ENCODE measurements at regions of chr1 and their contacts with region 1.

Region 1: DNA sequence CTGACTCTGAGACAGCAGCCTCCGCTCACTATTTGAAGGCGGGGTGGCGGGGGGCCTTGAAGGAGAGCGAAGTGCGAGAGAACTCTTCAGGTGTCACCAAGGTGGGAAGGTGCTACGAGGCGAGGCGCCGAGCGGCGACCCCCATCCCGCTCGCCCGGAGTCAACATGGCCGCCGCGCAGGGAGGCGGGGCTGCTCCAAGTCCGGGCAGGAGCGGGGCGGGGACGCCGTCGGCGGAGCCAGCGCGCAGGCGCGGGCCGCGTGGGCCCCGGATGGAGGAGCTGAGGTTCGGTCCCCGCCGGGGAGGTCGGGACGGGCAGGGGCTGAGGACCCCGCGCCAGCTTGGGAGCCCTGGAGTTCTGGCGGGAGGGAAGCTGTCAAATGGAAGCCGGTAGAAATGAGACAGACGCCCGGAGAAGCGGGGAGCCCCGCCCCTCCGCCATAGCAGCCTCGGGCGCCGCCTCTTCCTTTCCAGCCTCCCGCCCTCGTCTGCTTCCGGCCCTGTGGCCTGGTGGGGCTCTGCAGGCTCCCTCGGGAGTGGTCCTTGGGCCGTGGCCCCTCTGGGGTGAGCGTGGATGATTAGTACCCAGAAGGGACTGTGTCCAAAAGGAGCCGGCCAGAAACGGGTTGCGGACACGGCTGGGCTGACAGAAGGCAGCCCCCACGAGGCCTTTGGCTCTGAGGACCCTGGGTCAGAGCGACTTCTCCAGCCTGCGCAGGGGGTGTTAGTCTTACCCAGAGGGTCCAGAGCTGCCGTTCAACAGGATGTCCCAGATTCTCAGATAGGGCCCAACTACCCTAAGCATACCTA is at the start of gene PIGV:
- DNase-seq: no peak
- ATAC-seq: peak; percentile 78
- H3K4me3 ChIP-seq: peak within 1 kb of the TSS; percentile 72
- H3K27ac ChIP-seq: peak within 1 kb of the TSS; percentile 99
- H3K4me1 ChIP-seq: peaks cover 43% of the 10 kb centered on the region
- H3K27me3 ChIP-seq: no peaks in the 10 kb centered on the region
- CTCF ChIP-seq: no peak
- EP300 ChIP-seq: no peak
- POLR2A ChIP-seq: peak; percentile 73
- RAD21 ChIP-seq: no peak
- polyA plus RNA-seq, gene PIGV: 8.8 to 12.8 TPM

Region 2: GRCh38 chr1:26500488-26501175 is 287.3 kb before region 1 on chr1:
- CTCF ChIA-PET with region 1: interaction called, 38 read pairs
- POLR2A ChIA-PET with region 1: interaction called, 12 read pairs
- RAD21 ChIA-PET with region 1: interaction called, 27 read pairs
- SMC1A ChIA-PET with region 1: interaction called, 10 read pairs
- in situ Hi-C with region 1: no loop called
- intact Hi-C with region 1: loop called (anchors 5 kb)
- DNase-seq: peak; percentile 39
- ATAC-seq: peak; percentile 86
- H3K4me3 ChIP-seq: peak overlapping the region; percentile 89
- H3K27ac ChIP-seq: peak overlapping the region; percentile 95
- H3K4me1 ChIP-seq: peaks cover 14% of the 10 kb centered on the region
- H3K27me3 ChIP-seq: no peaks in the 10 kb centered on the region
- CTCF ChIP-seq: no peak
- EP300 ChIP-seq: peak in 1 of 2 experiments; percentile 36; a peak in 1 of 4 replicates
- POLR2A ChIP-seq: peak; percentile 97
- RAD21 ChIP-seq: no peak

Region 3: DNA sequence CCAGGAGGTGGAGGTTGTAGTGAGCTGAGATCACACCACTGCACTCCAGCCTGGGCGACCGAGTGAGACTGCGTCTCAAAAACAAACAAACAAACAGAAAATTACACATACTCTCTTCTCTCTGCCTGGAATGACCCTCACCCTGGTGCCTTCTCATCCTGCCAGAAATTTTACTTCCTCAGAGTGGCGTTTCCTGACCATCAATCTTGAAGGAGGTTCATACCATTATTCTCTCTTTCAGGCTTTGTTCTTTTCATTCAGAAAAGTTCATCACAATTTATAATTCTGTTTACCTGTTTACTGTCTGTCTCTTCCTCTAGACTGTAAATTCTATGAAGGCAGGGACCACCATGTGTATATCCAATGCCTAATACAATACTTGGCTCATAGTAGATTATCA is 179.0 kb before region 1 on chr1:
- CTCF ChIA-PET with region 1: interaction called, 450 read pairs
- POLR2A ChIA-PET with region 1: interaction called, 47 read pairs
- RAD21 ChIA-PET with region 1: interaction called, 262 read pairs
- SMC1A ChIA-PET with region 1: interaction called, 268 read pairs
- in situ Hi-C with region 1: loop called (anchors 5 kb)
- intact Hi-C with region 1: no loop called
- DNase-seq: no peak
- ATAC-seq: no peak
- H3K4me3 ChIP-seq: no peak overlapping the region
- H3K27ac ChIP-seq: no peak overlapping the region
- H3K4me1 ChIP-seq: no peaks in the 10 kb centered on the region
- H3K27me3 ChIP-seq: no peaks in the 10 kb centered on the region
- CTCF ChIP-seq: peak in 1 of 3 experiments; percentile 35; a peak in 2 of 6 replicates
- EP300 ChIP-seq: no peak
- POLR2A ChIP-seq: no peak
- RAD21 ChIP-seq: peak; percentile 49

Region 4: GRCh38 chr1:26700711-26701110 is 87.2 kb before region 1 on chr1:
- CTCF ChIA-PET with region 1: interaction called, 46 read pairs
- POLR2A ChIA-PET with region 1: interaction called, 69 read pairs
- RAD21 ChIA-PET with region 1: interaction called, 90 read pairs
- SMC1A ChIA-PET with region 1: interaction called, 139 read pairs
- in situ Hi-C with region 1: no loop called
- intact Hi-C with region 1: loop called (anchors 1 kb)
- DNase-seq: no peak
- ATAC-seq: peak; percentile 1
- H3K4me3 ChIP-seq: peak overlapping the region; percentile 98
- H3K27ac ChIP-seq: peak overlapping the region; percentile 65
- H3K4me1 ChIP-seq: peaks cover 8% of the 10 kb centered on the region
- H3K27me3 ChIP-seq: no peaks in the 10 kb centered on the region
- CTCF ChIP-seq: no peak
- EP300 ChIP-seq: no peak
- POLR2A ChIP-seq: no peak
- RAD21 ChIP-seq: no peak

Region 5: DNA sequence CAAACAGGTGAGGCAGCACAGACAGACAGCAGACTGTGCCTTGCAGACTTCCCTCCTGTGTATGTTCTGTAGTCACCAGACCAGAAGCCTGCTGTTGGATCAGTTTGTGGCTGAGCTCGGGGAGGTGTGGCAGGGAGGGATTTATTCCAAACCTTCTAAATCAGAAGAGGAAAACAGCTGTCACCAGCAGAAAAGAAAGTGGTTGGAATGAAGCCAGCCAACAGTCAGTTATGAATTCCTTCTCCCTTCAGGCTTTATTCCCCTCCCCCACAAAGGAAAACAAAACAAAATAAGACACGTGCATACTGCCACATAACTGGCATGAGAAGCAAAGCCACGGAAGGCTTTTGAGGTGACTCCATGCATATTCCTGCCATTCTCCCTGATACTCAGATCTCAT is 19.2 kb before region 1 on chr1:
- CTCF ChIA-PET with region 1: interaction called, 40 read pairs
- POLR2A ChIA-PET with region 1: interaction called, 3 read pairs
- RAD21 ChIA-PET with region 1: interaction called, 3 read pairs
- SMC1A ChIA-PET with region 1: interaction called, 11 read pairs
- in situ Hi-C with region 1: no loop called
- intact Hi-C with region 1: no loop called
- DNase-seq: no peak
- ATAC-seq: no peak
- H3K4me3 ChIP-seq: no peak overlapping the region
- H3K27ac ChIP-seq: no peak overlapping the region
- H3K4me1 ChIP-seq: peaks cover 7% of the 10 kb centered on the region; the same call in 1 of the 2 replicates
- H3K27me3 ChIP-seq: no peaks in the 10 kb centered on the region
- CTCF ChIP-seq: no peak
- EP300 ChIP-seq: no peak
- POLR2A ChIP-seq: no peak
- RAD21 ChIP-seq: no peak

Region 6: GRCh38 chr1:26833432-26834405 is 45.8 kb after region 1 on chr1:
- CTCF ChIA-PET with region 1: interaction called, 21 read pairs
- POLR2A ChIA-PET with region 1: interaction called, 8 read pairs
- RAD21 ChIA-PET with region 1: interaction called, 26 read pairs
- SMC1A ChIA-PET with region 1: interaction called, 22 read pairs
- in situ Hi-C with region 1: no loop called
- intact Hi-C with region 1: no loop called
- DNase-seq: peak; percentile 88
- ATAC-seq: peak; percentile 88
- H3K4me3 ChIP-seq: peak overlapping the region; percentile 56; the same call in 1 of the 2 replicates
- H3K27ac ChIP-seq: peak overlapping the region; percentile 99
- H3K4me1 ChIP-seq: peaks cover 40% of the 10 kb centered on the region
- H3K27me3 ChIP-seq: no peaks in the 10 kb centered on the region
- CTCF ChIP-seq: peak; percentile 40 to 54 (median 46); a peak in 5 of 6 replicates
- EP300 ChIP-seq: no peak; a peak in 1 of 4 replicates
- POLR2A ChIP-seq: peak; percentile 84
- RAD21 ChIP-seq: peak; percentile 69

Measured in GM12878 (cell line).